B cell (primary cell): ENCODE measurements at regions of chr14 and their contacts with region 1.

Region 1: DNA sequence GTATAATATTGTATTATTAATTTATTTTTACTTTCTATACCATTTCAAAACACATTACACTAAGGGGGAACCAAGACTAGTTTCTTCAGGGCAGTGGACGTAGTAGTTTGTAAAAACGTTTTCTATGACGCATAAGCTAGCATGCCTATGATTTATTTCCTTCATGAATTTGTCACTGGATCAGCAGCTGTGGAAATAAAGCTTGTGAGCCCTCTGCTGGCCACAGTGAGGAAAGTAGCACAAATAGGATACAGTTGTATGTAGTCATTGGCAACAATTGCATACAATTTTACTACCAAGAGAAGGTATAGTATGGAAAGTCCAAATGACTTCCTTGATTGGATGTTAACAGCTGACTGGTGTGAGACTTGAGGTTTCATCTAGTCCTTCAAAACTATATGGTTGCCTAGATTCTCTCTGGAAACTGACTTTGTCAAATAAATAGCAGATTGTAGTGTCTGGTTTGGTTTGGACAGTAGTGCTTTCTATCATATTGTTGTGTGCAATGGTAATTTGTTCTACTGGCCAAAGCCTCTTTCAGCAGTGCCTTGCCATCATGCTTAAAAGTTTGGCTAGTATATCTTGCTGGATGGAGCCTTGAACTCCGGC is 24.3 kb upstream of the PLEKHD1 start:
- DNase-seq: peak; percentile 72
- ATAC-seq: peak; percentile 95
- H3K4me3 ChIP-seq: no peak overlapping the region
- H3K4me3 Mint-ChIP-seq: no peak overlapping the region
- H3K27ac ChIP-seq: no peak overlapping the region
- H3K27ac Mint-ChIP-seq: no peak overlapping the region
- H3K4me1 ChIP-seq: no peaks in the 10 kb centered on the region
- H3K4me1 Mint-ChIP-seq: peaks cover 3% of the 10 kb centered on the region
- H3K27me3 ChIP-seq: no peaks in the 10 kb centered on the region
- H3K27me3 Mint-ChIP-seq: no peaks in the 10 kb centered on the region
- CTCF ChIP-seq: peak; percentile 80

Region 2: DNA sequence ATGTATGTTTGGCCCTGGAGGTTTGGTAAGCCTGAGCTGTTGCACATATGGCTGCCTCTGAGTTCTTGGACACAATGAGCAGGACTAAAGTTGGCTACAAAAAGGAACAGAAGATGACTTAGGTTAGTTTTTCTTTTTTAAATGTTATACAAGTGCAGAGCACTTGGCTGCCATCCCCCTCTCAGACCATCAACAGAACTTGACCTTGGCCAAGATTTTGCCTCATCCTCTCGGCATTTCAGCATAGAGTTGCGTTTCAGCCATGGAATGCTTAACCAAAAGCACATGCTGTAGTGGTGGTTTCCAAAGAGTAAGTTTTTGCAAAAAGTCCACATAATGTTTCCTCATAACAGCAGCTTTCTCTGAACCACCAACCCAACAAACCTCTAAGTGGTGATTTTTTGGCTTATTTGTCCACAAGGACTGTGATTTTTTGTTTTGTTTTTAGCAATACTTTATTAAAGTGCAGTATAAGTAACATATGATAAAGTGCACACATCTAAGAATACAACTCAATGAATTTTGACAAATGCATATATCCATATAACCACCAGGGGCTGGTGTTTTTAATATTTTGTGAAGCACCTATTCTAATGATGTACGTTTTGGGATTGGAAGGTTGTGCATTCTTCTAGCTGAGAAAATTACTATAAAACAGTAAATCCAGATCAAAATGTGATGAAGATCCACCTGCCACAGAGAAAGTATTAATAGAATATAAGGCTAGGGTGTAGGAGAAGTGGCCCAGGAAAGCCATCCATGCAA is 212.3 kb before region 1 on chr14:
- CTCF ChIA-PET with region 1: interaction called, 110 read pairs
- POLR2A ChIA-PET with region 1: no interaction called
- intact Hi-C with region 1: no loop called
- DNase-seq: no peak
- ATAC-seq: no peak
- H3K4me3 ChIP-seq: no peak overlapping the region
- H3K4me3 Mint-ChIP-seq: no peak overlapping the region
- H3K27ac ChIP-seq: no peak overlapping the region
- H3K27ac Mint-ChIP-seq: no peak overlapping the region
- H3K4me1 ChIP-seq: no peaks in the 10 kb centered on the region
- H3K4me1 Mint-ChIP-seq: peaks cover 2% of the 10 kb centered on the region
- H3K27me3 ChIP-seq: peaks cover 0 to 5% (median 0%) of the 10 kb centered on the region in 4 experiments
- H3K27me3 Mint-ChIP-seq: peaks cover 14% of the 10 kb centered on the region
- CTCF ChIP-seq: peak; percentile 22

Region 3: GRCh38 chr14:69260861-69261564 is 199.2 kb before region 1 on chr14:
- CTCF ChIA-PET with region 1: interaction called, 25 read pairs
- POLR2A ChIA-PET with region 1: no interaction called
- intact Hi-C with region 1: loop called (anchors 1 kb)
- DNase-seq: peak; percentile 60
- ATAC-seq: peak; percentile 79
- H3K4me3 ChIP-seq: peak overlapping the region in 3 of 5 experiments; percentile 18 to 50 (median 37)
- H3K4me3 Mint-ChIP-seq: peak overlapping the region; percentile 78
- H3K27ac ChIP-seq: no peak overlapping the region
- H3K27ac Mint-ChIP-seq: no peak overlapping the region
- H3K4me1 ChIP-seq: peaks cover 12 to 24% of the 10 kb centered on the region in 2 donors
- H3K4me1 Mint-ChIP-seq: peaks cover 14% of the 10 kb centered on the region
- H3K27me3 ChIP-seq: peaks cover 0 to 75% (median 19%) of the 10 kb centered on the region in 4 experiments
- H3K27me3 Mint-ChIP-seq: peaks cover 58% of the 10 kb centered on the region
- CTCF ChIP-seq: peak; percentile 65